ENCODE measurements at regions of chr4 and their contacts with region 1.

Region 1: DNA sequence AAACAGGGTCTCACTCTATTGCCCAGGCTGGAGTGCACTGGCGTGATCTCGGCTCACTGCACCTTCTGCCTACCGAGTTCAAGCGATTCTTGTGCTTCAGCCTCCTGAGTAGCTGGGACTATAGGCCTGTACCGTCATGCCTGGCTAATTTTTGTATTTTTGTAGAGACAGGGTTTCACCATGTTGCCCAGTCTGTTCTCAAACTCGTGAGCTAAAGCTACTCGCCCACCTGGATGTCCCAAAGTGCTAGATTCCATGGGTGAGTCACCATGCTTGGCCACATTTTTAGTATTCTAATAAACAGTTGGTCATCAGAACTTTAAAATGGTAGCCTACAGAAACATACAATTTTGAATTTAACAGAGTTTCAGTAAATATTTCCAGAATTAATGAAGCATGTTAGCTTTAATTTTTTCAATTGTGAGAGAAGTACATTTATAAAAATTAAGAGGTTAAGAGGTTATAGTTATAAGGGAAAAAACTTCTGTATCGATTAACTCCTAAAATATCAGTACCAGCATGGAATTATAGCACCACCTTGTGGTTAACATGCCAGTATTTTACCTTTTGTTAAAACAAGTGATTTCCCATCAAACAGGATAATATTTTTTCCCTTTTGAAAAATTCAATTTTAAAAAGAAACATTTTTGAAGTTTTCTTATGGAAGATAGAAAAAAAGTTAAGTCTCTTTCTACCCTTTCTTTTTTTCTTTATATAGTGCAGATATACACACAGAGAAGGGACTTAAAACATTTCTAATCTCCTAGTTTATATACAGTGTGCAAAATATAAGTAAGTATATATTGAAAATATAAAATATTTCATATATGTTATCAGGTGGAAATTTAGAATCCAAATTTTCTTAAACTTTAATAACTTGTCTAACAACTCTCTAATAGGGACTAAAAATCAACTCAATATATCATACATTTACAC is 35.4 kb downstream of the CEP44 start:
- DNase-seq: peak; percentile 55
- H3K4me3 ChIP-seq: no peak overlapping the region
- H3K27ac ChIP-seq: no peak overlapping the region
- H3K4me1 ChIP-seq: peaks cover 35% of the 10 kb centered on the region
- H3K27me3 ChIP-seq: no peaks in the 10 kb centered on the region
- CTCF ChIP-seq: peak; percentile 83

Region 2: DNA sequence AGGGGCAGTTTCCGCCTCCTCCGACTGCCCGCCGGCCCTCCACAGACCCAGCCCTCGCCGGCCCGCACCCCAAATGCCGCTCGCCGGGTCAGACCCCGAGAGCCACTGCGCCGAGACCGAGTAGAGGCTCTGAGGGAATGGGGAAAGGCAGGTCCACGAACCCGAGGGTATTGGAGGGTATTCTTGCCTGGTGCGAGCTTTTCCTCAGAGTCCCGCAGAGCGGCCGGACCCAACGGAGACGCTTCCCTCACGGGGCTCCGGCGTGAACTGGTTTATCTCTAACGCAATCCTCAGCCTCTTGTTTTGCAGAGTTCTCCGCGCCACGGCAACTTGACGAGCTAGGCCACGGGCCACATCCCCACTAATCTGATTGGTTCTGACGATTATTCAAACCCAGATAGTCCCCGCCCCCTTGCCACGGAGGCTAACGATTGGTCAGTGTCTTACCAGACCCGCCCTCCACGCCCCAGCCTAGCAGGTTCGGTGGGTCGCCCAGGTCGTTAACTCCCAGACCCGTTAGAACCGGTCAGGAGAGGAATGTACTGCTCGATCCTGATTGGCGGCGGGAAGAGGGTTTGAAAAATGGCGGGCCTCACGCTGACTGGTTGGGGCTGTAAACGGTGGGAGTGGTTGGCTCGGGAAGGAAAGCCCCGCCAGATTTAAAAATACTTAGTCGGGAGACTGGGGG is 984.9 kb before region 1 on chr4 and contains the start of gene HMGB2:
- CTCF ChIA-PET with region 1: no interaction called
- POLR2A ChIA-PET with region 1: no interaction called
- intact Hi-C with region 1: loop called (anchors 10 kb)
- DNase-seq: peak; percentile 100
- H3K4me3 ChIP-seq: peak within 1 kb of the TSS; percentile 93
- H3K27ac ChIP-seq: peak within 1 kb of the TSS; percentile 99
- H3K4me1 ChIP-seq: peaks cover 32% of the 10 kb centered on the region
- H3K27me3 ChIP-seq: no peaks in the 10 kb centered on the region
- CTCF ChIP-seq: no peak
- total RNA-seq, gene HMGB2: 392 and 435 TPM in 2 replicates

Region 3: DNA sequence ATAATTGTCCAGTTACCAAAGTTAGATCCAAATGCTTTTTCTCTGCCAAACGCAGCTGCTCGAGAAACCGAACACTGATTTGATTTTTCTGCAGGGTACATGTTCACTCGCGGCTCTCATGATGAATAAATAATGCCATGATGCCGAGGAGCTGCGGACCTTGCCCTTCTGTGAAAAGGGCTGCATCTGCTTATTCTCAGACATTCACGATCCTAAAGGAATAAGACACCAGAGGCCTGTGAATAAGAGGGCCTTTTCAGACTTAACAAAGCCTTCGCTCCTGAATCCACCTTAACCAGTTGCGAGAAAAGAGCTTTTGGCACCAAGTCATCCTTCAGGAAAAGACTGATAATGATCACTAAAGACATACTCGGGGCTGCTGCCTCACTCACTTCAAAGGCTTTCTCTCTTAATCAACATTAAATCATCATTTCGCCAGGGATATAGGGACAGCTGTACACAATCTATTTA is 183.1 kb before region 1 on chr4:
- CTCF ChIA-PET with region 1: no interaction called
- POLR2A ChIA-PET with region 1: no interaction called
- intact Hi-C with region 1: no loop called
- DNase-seq: peak; percentile 56
- H3K4me3 ChIP-seq: peak overlapping the region; percentile 31
- H3K27ac ChIP-seq: peak overlapping the region; percentile 8
- H3K4me1 ChIP-seq: peaks cover 46% of the 10 kb centered on the region
- H3K27me3 ChIP-seq: no peaks in the 10 kb centered on the region
- CTCF ChIP-seq: no peak

Region 4: DNA sequence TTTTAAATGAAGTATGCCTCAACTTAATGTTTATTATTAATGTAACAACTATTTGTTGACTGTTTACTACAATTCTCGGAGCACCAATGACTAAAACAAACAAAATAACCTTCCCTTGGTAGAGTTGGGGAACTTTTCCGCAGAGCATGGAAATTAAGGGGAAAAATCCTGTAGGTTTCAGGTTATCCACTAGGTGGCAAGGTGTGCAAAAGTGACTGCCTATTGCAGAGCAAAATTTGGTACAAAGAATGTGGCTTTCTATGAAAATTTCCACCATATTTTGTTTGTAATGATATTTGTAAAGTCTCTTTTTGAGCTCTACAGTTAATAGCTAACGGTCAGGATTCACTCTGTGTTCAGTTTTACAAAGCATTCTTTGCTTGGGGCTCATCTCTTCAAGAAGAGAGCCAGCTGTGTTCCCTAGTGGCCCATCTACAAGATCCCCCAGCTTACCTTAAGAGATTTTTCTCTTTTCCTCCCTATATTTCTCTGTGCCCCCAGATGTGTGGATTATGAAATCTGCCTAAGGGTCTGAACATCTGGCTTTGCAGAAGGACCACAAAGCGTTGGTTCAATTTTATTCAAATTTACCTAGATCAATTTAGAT is 96.7 kb before region 1 on chr4:
- CTCF ChIA-PET with region 1: no interaction called
- POLR2A ChIA-PET with region 1: no interaction called
- intact Hi-C with region 1: loop called (anchors 2 kb)
- DNase-seq: peak; percentile 53
- H3K4me3 ChIP-seq: no peak overlapping the region
- H3K27ac ChIP-seq: no peak overlapping the region
- H3K4me1 ChIP-seq: peaks cover 3% of the 10 kb centered on the region
- H3K27me3 ChIP-seq: no peaks in the 10 kb centered on the region
- CTCF ChIP-seq: peak; percentile 72